ENCODE measurements at regions of chr11 and their contacts with region 1.

Region 1: GRCh38 chr11:128757235-128757711 is 63.4 kb downstream of the FLI1 start:
- DNase-seq: peak; percentile 41
- ATAC-seq: peak; percentile 79
- H3K4me3 Mint-ChIP-seq: peak overlapping the region; percentile 66
- H3K27ac Mint-ChIP-seq: peak overlapping the region; percentile 91
- H3K4me1 Mint-ChIP-seq: peaks cover 80% of the 10 kb centered on the region
- H3K27me3 Mint-ChIP-seq: no peaks in the 10 kb centered on the region
- CTCF ChIP-seq: peak; percentile 81

Region 2: GRCh38 chr11:128157423-128158298 is 599.6 kb before region 1 on chr11:
- CTCF ChIA-PET with region 1: interaction called, 17 read pairs
- POLR2A ChIA-PET with region 1: no interaction called
- intact Hi-C with region 1: loop called (anchors 5 kb)
- DNase-seq: no peak
- ATAC-seq: peak; percentile 92
- H3K4me3 Mint-ChIP-seq: peak overlapping the region; percentile 82
- H3K27ac Mint-ChIP-seq: peak overlapping the region; percentile 50
- H3K4me1 Mint-ChIP-seq: no peaks in the 10 kb centered on the region
- H3K27me3 Mint-ChIP-seq: peaks cover 19% of the 10 kb centered on the region
- CTCF ChIP-seq: no peak

Region 3: DNA sequence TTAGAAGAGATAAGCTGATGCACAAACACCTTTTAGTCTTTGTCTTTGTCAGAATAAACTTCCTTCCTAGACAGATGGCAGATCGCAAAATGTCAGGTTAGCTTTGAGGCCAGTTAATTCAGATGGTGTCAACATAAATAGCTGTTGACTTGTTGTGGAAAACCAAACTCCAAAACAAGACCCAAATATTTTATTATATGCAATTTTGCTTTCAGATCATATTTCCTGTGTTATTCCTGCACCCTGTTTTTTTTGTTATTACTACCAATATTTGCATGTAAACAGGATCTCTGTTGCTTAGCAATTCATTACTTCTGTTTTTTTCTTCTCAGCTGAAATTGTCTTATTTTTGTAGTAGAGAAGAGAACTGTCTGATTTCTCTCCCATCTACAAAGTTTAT is 485.9 kb before region 1 on chr11:
- CTCF ChIA-PET with region 1: no interaction called
- POLR2A ChIA-PET with region 1: interaction called, 5 read pairs
- intact Hi-C with region 1: loop called (anchors 5 kb)
- DNase-seq: no peak
- ATAC-seq: peak; percentile 47
- H3K4me3 Mint-ChIP-seq: peak overlapping the region; percentile 39
- H3K27ac Mint-ChIP-seq: peak overlapping the region; percentile 88
- H3K4me1 Mint-ChIP-seq: peaks cover 61% of the 10 kb centered on the region
- H3K27me3 Mint-ChIP-seq: no peaks in the 10 kb centered on the region
- CTCF ChIP-seq: no peak

Region 4: GRCh38 chr11:128482512-128483191 is 274.6 kb before region 1 on chr11:
- CTCF ChIA-PET with region 1: interaction called, 12 read pairs
- POLR2A ChIA-PET with region 1: no interaction called
- intact Hi-C with region 1: no loop called
- DNase-seq: no peak
- ATAC-seq: peak; percentile 18
- H3K4me3 Mint-ChIP-seq: peak overlapping the region; percentile 67
- H3K27ac Mint-ChIP-seq: peak overlapping the region; percentile 89
- H3K4me1 Mint-ChIP-seq: peaks cover 95% of the 10 kb centered on the region
- H3K27me3 Mint-ChIP-seq: no peaks in the 10 kb centered on the region
- CTCF ChIP-seq: no peak

Region 5: GRCh38 chr11:128603752-128604414 is 153.4 kb before region 1 on chr11:
- CTCF ChIA-PET with region 1: interaction called, 25 read pairs
- POLR2A ChIA-PET with region 1: interaction called, 6 read pairs
- intact Hi-C with region 1: loop called (anchors 1 kb)
- DNase-seq: no peak
- ATAC-seq: peak; percentile 63
- H3K4me3 Mint-ChIP-seq: no peak overlapping the region
- H3K27ac Mint-ChIP-seq: peak overlapping the region; percentile 78
- H3K4me1 Mint-ChIP-seq: peaks cover 70% of the 10 kb centered on the region
- H3K27me3 Mint-ChIP-seq: no peaks in the 10 kb centered on the region
- CTCF ChIP-seq: no peak

Region 6: GRCh38 chr11:128618603-128619002 is 138.7 kb before region 1 on chr11:
- CTCF ChIA-PET with region 1: no interaction called
- POLR2A ChIA-PET with region 1: no interaction called
- intact Hi-C with region 1: no loop called
- DNase-seq: no peak
- ATAC-seq: no peak
- H3K4me3 Mint-ChIP-seq: peak overlapping the region; percentile 17
- H3K27ac Mint-ChIP-seq: peak overlapping the region; percentile 99
- H3K4me1 Mint-ChIP-seq: peaks cover 87% of the 10 kb centered on the region
- H3K27me3 Mint-ChIP-seq: no peaks in the 10 kb centered on the region
- CTCF ChIP-seq: no peak

Region 7: GRCh38 chr11:128720522-128720985 is 36.7 kb before region 1 on chr11:
- CTCF ChIA-PET with region 1: interaction called, 11 read pairs
- POLR2A ChIA-PET with region 1: interaction called, 31 read pairs
- intact Hi-C with region 1: loop called (anchors 5 kb)
- DNase-seq: peak; percentile 42
- ATAC-seq: peak; percentile 56
- H3K4me3 Mint-ChIP-seq: peak overlapping the region; percentile 87
- H3K27ac Mint-ChIP-seq: peak overlapping the region; percentile 98
- H3K4me1 Mint-ChIP-seq: peaks cover 99% of the 10 kb centered on the region
- H3K27me3 Mint-ChIP-seq: no peaks in the 10 kb centered on the region
- CTCF ChIP-seq: no peak

Region 8: GRCh38 chr11:128831174-128832120 is 74.2 kb after region 1 on chr11:
- CTCF ChIA-PET with region 1: interaction called, 29 read pairs
- POLR2A ChIA-PET with region 1: no interaction called
- intact Hi-C with region 1: loop called (anchors 1 kb)
- DNase-seq: peak; percentile 75
- ATAC-seq: peak; percentile 92
- H3K4me3 Mint-ChIP-seq: peak overlapping the region; percentile 70
- H3K27ac Mint-ChIP-seq: peak overlapping the region; percentile 91
- H3K4me1 Mint-ChIP-seq: peaks cover 80% of the 10 kb centered on the region
- H3K27me3 Mint-ChIP-seq: no peaks in the 10 kb centered on the region
- CTCF ChIP-seq: no peak

Region 9: GRCh38 chr11:128905345-128906184 is 148.3 kb after region 1 on chr11:
- CTCF ChIA-PET with region 1: no interaction called
- POLR2A ChIA-PET with region 1: no interaction called
- intact Hi-C with region 1: no loop called
- DNase-seq: peak; percentile 48
- ATAC-seq: peak; percentile 56
- H3K4me3 Mint-ChIP-seq: peak overlapping the region; percentile 79
- H3K27ac Mint-ChIP-seq: no peak overlapping the region
- H3K4me1 Mint-ChIP-seq: peaks cover 26% of the 10 kb centered on the region
- H3K27me3 Mint-ChIP-seq: peaks cover 48% of the 10 kb centered on the region
- CTCF ChIP-seq: no peak